Mammary epithelial cell (primary cell): ENCODE measurements at regions of chr1 and their contacts with region 1.

Region 1: DNA sequence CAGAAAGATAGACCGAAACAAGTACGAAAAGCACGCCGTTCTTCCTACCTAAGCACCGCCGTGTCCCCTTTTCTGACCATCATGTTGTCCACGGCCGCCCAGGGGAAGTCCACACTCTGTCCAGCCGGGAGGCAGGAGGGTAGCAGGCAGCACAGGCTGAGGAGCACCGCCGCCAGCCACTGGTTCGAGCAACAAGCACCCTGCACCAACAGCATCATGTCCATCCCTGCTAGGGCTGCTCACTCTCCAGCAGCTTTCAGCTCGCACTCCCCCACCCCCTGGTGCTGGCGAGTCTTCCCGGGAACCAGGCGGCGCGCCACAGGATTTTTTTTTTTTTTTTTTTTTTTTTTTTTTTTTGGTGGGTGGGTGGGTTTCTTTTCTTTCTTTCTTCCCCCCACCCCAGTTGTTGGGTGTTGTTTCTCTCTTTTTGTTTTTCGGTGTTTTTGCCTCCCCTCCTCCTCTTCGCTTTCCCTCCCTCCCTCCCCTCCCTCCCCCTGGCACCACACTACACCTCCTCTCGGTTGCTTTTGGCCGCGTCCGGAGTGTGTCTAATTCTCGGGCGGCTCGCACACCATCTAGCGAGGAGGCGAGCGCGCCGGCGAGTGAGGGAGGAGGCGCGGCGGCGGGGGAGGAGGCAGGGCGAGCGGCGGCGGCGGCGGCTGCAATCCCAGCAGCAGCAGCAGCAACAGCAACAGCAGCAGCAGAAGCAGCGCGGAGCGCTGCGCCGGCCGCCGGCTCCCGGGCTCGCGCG is at the start of gene NEGR1:
- DNase-seq: peak; percentile 95
- H3K4me3 ChIP-seq: peak within 1 kb of the TSS; percentile 63 to 78 (median 70)
- H3K27ac ChIP-seq: peak within 1 kb of the TSS; percentile 89
- H3K4me1 ChIP-seq: peaks cover 15% of the 10 kb centered on the region
- H3K27me3 ChIP-seq: no peaks in the 10 kb centered on the region
- CTCF ChIP-seq: peak in 1 of 2 donors; percentile 32
- total RNA-seq, gene NEGR1: 0.17 to 2.0 TPM

Region 2: DNA sequence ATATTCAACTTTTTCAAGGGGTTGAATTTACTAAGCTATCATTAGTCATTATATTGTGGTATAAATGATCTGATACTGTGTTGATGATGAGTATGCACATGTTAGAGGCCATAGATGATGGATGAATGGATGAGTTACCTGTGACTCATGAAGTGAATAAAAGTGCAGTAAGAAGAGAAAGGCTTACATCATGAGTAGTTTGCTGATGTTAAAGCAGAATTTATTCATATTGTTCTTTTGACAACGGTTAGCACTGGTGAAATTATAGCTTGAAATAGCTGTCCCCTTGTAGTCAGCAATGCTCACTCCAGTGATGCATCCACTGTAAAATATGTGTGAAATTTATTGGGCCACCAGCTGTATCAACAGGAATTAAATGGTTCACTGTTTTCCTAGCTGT is 660.7 kb before region 1 on chr1:
- CTCF ChIA-PET with region 1: no interaction called
- dilution Hi-C with region 1: no loop called
- in situ Hi-C with region 1: no loop called
- intact Hi-C with region 1: loop called (anchors 10 kb)
- DNase-seq: peak; percentile 93
- H3K4me3 ChIP-seq: no peak overlapping the region
- H3K27ac ChIP-seq: no peak overlapping the region
- H3K4me1 ChIP-seq: no peaks in the 10 kb centered on the region
- H3K27me3 ChIP-seq: no peaks in the 10 kb centered on the region
- CTCF ChIP-seq: no peak

Region 3: DNA sequence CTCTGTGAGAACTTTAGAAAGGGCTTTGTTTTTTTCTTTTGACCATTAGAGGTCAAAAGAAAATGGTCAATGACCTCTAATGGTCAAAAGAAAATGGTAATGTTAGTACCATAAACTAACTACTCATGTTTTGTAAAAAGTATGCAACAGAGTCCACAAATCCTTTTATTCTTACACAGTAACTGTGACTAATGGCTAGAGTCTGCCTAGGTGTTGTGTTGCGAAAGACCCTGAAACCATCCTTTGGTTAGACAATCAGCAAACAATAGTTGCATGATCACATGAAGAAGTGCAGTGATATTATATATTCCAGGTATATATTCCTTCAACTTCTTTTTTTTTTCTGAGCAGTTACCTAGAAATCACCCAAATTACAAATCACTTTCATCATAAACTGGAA is 41.0 kb before region 1 on chr1:
- CTCF ChIA-PET with region 1: no interaction called
- dilution Hi-C with region 1: no loop called
- in situ Hi-C with region 1: no loop called
- intact Hi-C with region 1: loop called (anchors 2 kb)
- DNase-seq: peak; percentile 75
- H3K4me3 ChIP-seq: no peak overlapping the region
- H3K27ac ChIP-seq: no peak overlapping the region
- H3K4me1 ChIP-seq: no peaks in the 10 kb centered on the region
- H3K27me3 ChIP-seq: no peaks in the 10 kb centered on the region
- CTCF ChIP-seq: no peak

Region 4: DNA sequence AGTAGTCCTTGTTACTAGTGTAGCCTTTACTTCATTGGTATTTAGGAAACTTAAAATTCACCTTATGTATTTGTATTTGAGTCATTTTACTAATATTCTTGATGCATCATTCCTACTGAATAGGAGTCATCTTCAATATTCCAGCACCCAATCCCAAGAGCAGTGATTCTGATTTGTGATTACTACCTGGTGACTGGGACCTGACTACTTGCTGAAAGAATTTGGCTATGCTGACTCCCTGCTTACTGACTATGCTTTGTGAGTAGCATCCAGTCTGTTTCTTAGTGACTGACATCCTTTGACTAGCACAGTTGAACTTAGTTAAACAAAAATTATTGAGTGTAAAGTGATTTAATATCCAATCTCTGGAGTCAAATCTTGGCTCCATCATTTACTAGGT is 129.8 kb after region 1 on chr1:
- CTCF ChIA-PET with region 1: no interaction called
- dilution Hi-C with region 1: no loop called
- in situ Hi-C with region 1: no loop called
- intact Hi-C with region 1: loop called (anchors 1 kb)
- DNase-seq: peak; percentile 91
- H3K4me3 ChIP-seq: no peak overlapping the region
- H3K27ac ChIP-seq: no peak overlapping the region
- H3K4me1 ChIP-seq: peaks cover 5% of the 10 kb centered on the region
- H3K27me3 ChIP-seq: no peaks in the 10 kb centered on the region
- CTCF ChIP-seq: no peak

Region 5: DNA sequence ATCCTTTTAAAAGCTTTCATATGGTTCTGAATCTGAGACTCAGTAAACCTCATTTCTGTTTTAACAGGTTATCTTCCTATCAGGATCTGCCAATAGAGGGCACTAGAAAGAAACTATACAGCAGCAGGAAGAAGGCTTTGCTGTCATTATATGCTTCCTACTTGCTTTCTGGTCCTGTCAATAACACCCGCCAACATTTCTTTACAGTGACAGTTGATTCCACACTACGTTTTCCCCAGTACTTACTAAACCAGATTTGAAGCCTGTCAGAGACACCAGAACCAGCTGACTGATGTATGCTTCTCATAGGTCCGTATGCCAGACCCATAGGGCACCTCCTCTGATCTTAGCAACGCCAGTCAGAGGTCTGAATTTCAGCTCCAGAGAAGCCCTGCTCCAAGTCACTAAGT is 340.9 kb after region 1 on chr1:
- CTCF ChIA-PET with region 1: interaction called, 3 read pairs
- dilution Hi-C with region 1: no loop called
- in situ Hi-C with region 1: no loop called
- intact Hi-C with region 1: loop called (anchors 1 kb)
- DNase-seq: peak; percentile 35
- H3K4me3 ChIP-seq: no peak overlapping the region
- H3K27ac ChIP-seq: no peak overlapping the region
- H3K4me1 ChIP-seq: no peaks in the 10 kb centered on the region
- H3K27me3 ChIP-seq: no peaks in the 10 kb centered on the region
- CTCF ChIP-seq: peak; percentile 61 to 73